WTC11 (cell line): ENCODE measurements at regions of chr9 and their contacts with region 1.

Region 1: DNA sequence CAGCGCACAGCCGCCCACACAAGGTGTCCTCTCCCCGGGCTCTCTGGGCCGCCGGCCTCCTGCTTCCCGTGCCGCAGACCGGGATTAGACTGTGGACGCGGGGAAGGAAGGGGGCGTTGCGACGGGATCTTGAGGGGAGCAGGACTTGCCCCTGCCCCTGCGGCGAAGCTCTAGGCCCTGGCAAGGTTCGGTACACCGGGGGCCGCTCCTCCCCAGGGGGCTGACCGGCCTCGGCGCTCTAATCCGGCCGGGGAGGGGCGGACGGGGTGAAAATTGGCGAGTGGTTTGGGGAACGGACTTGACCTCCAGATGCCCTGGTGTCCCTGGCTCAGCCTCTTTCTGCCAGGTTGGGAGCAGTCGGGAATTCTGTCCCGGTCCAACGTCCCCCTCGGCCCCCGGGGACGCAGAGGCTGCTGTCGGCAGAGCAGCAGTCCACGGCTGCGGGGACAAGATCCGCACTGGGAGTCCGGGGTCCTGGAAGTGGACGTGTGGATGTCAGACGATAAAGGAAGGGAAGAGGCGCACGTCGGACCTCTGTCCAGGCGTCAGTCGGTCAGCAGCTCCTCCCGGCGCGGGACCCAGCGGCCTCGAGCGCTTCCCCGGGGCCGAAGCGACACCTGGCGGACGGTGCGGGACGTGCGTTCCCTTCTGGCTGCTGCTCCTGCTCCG is 1.9 kb upstream of the CNTFR start:
- DNase-seq: peak; percentile 93
- ATAC-seq: peak; percentile 64
- H3K4me3 Mint-ChIP-seq: peak overlapping the region; percentile 78
- H3K27ac Mint-ChIP-seq: no peak overlapping the region
- H3K4me1 Mint-ChIP-seq: peaks cover 32% of the 10 kb centered on the region
- H3K27me3 Mint-ChIP-seq: peaks cover 79% of the 10 kb centered on the region
- CTCF ChIP-seq: peak; percentile 89

Region 2: GRCh38 chr9:34500623-34501267 is 90.6 kb before region 1 on chr9:
- CTCF ChIA-PET with region 1: interaction called, 28 read pairs
- POLR2A ChIA-PET with region 1: no interaction called
- DNase-seq: peak; percentile 83
- ATAC-seq: peak; percentile 80
- H3K4me3 Mint-ChIP-seq: no peak overlapping the region
- H3K27ac Mint-ChIP-seq: no peak overlapping the region
- H3K4me1 Mint-ChIP-seq: peaks cover 12% of the 10 kb centered on the region
- H3K27me3 Mint-ChIP-seq: peaks cover 4% of the 10 kb centered on the region; the same call in 1 of the 2 replicates
- CTCF ChIP-seq: peak; percentile 98

Region 3: DNA sequence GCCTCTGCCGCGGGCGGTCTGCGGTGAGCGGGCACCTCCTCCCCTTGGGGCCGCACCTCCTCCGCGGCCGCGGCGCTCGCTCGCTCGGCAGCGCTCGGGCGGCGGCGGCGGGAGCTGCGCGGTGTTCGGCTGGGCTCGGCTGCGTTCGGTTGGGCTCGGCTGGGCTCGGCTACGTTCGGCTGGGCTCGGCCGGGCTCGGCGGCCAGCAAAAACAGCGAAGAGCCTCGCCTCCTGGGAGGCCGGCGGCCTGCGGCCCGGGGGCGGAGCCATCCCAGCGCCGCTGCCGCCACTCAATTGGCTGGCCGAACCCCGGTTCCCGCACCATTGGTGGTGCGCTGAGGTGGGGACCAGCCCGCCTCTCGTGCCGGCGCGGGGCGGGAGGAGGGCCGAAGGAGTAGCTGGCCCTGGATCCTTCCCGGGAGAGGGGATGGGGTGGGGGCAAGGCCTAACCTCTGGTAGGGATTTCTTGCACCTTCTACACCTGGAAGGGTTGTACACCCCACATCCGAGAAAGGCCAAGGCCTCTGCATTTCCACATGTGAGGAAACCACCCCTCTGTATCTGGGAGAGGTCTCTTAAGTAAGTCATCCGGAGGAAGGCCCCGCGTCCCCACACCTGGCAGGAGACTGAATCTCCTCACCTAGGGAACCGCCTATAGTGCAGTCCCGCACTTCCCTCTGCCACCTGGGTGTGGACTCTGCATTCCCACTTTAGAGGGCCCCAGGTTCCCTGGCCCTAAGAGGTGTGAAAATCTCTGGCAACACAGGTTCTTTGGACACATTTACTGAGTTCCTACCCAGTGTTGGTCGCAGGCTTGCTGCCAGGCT is 68.2 kb before region 1 on chr9 and contains the start of gene ENHO:
- CTCF ChIA-PET with region 1: interaction called, 17 read pairs
- POLR2A ChIA-PET with region 1: no interaction called
- DNase-seq: peak; percentile 94
- ATAC-seq: peak; percentile 97
- H3K4me3 Mint-ChIP-seq: peak within 1 kb of the TSS; percentile 86
- H3K27ac Mint-ChIP-seq: no peak within 1 kb of the TSS; the same call in 1 of the 2 replicates
- H3K4me1 Mint-ChIP-seq: peaks cover 20% of the 10 kb centered on the region
- H3K27me3 Mint-ChIP-seq: peaks cover 44% of the 10 kb centered on the region
- CTCF ChIP-seq: no peak
- total RNA-seq, gene ENHO: 26.9 to 28.3 TPM (median 27.9 TPM) in 3 replicates

Region 4: DNA sequence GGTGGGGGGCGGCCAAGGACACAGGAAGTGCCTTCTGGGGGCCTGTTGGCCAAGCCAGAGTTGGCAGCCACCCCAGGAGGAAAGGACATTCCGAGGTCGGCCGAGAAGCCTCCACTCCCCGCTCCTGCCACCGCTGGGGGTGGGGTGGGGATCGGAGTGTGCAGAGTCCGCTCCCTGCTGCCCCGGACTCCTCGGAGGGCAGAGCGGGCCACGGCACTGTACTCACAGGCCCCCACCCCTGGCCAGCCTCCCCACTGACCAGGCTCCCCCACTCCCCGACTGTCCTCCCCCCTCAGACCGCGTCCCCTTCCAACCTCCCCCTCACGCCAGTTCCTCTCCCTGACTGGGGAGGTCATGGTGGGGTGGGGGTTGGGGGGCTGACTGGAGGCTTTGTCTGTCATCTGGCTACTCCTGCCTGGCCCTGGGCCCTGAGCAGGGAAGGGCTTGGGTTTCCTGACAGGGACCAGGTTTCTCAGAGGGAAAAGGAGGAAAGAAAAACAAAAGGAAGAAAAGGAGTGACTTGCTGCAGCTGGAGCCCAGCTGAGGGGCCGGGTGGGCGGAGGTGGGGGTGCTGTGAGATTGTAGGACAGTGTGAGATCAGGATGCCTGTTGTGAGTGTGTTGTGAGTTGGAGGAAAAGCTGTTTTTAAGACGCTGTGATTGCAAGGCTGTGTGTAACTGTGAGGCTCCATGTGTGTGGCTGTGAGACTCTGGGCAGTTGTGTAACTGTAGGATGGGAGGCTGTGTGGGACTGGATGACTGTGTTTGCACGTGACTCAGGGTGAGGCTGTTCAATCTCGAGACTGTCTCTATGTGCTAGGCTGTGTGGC is 31.5 kb before region 1 on chr9:
- CTCF ChIA-PET with region 1: interaction called, 112 read pairs
- POLR2A ChIA-PET with region 1: interaction called, 3 read pairs
- DNase-seq: no peak
- ATAC-seq: peak; percentile 27
- H3K4me3 Mint-ChIP-seq: no peak overlapping the region
- H3K27ac Mint-ChIP-seq: peak overlapping the region; percentile 33; the same call in 1 of the 2 replicates
- H3K4me1 Mint-ChIP-seq: peaks cover 37% of the 10 kb centered on the region
- H3K27me3 Mint-ChIP-seq: peaks cover 4% of the 10 kb centered on the region
- CTCF ChIP-seq: no peak

Region 5: DNA sequence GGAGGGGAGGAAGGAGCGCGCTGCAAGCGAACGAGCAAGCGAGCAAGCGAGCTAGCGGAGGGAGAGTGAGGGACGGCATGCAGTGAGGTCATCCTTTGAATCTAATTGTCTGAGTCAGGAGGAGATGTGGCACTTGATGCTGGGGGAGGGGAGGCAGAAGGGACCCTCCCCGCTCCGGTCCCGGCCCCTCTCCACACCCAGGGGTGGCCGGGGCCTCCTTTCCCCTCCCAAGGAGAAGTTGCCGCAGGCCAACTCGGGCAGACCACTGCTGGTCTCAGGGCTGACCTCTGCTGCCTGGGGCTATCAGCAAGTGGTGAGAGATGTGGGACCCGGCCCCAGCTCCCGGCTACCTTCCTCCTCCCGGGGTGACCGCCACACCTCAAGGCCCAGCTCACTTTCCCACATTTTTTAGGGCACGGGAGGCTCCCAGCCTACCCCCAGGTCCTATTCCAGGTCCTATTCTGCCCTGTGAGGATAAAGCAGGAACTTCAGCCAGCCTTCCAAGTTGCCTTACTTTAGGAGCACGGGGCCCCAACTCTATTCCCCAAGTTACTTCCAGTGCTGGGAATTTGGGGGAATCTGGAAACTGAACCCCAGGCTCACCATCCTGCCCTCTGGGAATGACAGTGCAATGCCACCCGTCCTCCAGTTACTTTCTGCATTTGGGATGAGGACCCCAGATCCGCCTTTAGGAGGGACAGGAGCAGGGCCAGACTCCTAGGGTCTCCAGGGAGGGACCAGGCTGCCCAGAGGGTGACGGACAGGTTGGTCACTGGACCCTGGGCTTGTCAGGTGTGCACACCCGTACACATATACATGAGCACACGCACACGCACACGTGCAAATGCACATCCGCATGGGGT is 12.9 kb before region 1 on chr9:
- CTCF ChIA-PET with region 1: interaction called, 109 read pairs
- POLR2A ChIA-PET with region 1: interaction called, 6 read pairs
- DNase-seq: peak; percentile 56
- ATAC-seq: peak; percentile 25
- H3K4me3 Mint-ChIP-seq: peak overlapping the region; percentile 67
- H3K27ac Mint-ChIP-seq: no peak overlapping the region
- H3K4me1 Mint-ChIP-seq: peaks cover 48% of the 10 kb centered on the region
- H3K27me3 Mint-ChIP-seq: peaks cover 73% of the 10 kb centered on the region
- CTCF ChIP-seq: no peak